Left colon (tissue), 2 donors: ENCODE measurements at regions of chr2 and their contacts with region 1.

Region 1: DNA sequence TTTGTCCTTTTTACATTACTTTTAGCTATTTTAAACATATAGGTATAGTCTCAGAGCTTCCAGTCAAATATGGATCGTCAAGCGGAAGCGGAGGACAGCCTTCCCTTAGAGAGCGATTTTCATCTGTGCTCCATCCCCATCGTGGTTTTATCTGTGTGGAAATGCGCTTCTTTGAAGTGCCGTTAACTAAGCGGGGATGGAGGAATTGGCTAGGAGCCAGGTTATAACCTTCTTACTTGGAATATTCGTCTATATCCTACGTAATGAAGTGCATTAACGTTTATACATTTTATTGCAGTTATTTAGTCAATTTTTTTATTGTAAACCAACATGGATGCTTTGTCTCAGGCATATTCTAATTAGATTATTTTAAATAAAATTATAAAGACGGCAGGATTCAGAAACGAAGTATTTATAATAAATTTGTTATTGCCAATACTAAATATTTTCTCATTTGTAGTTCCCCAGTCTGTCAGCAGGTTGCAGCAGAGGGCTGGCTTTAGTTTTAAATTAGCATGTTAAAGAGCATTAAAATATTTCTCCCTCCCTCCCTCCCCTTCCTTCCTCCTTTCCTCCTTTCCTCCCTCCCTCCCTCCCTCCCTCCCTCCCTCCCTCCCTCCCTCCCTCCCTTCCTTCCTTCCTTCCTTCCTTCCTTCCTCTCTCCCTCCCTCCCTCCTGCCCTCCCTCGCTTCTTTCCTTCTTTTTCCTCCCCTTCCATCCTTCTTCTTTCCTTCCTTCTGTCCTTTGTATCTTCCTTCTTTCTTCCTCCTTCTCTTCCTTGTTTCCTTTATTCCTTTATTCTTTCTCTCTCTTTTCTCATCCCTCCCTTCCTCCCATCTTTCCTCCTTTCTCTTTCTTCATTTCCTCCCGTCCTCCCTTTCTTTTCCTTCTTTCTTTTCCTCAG is 80.6 kb upstream of the DOCK10 start:
- DNase-seq: no peak
- ATAC-seq: no peak

Region 2: DNA sequence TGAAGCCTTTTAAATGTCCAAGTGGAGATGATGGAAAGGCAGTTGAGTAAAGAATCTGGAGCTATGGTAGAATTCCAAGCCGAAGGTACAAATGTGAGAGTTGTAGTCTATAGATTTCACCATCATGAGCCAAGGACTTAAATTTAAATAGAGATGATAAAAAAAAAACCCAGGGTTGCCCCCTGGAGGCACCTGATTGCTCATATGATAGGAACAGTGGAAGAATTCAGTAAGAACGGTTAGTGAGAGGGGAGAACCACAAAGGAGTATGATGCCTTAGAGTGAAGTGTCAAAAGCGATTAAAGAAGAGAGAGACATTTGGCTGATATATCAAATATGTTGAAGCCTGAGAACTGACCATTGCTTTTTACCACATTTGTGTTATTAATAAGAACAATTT is 288.6 kb after region 1 on chr2:
- intact Hi-C with region 1: no loop called
- DNase-seq: no peak
- ATAC-seq: no peak

Region 3: GRCh38 chr2:225660262-225661131 is 537.7 kb after region 1 on chr2:
- intact Hi-C with region 1: loop called in 1 of 2 experiments (anchors 2 kb)
- DNase-seq: peak; percentile 31 to 87
- ATAC-seq: peak; percentile 73